Naive thymus-derived CD4-positive, alpha-beta T cell (primary cell): ENCODE measurements at regions of chr7 and their contacts with region 1.

Region 1: GRCh38 chr7:4725014-4725849 is 43.1 kb downstream of the FOXK1 start:
- DNase-seq: peak; percentile 28 to 70 (median 55)
- ATAC-seq: peak; percentile 80
- H3K4me3 ChIP-seq: peak overlapping the region; percentile 57
- H3K4me3 Mint-ChIP-seq: peak overlapping the region; percentile 85 to 95 (median 90)
- H3K27ac ChIP-seq: peak overlapping the region; percentile 86
- H3K27ac Mint-ChIP-seq: peak overlapping the region; percentile 67 to 97 (median 86)
- H3K4me1 ChIP-seq: peaks cover 4 to 15% of the 10 kb centered on the region in 2 donors
- H3K4me1 Mint-ChIP-seq: peaks cover 34 to 71% (median 62%) of the 10 kb centered on the region in 7 donors
- H3K27me3 ChIP-seq: no peaks in the 10 kb centered on the region
- H3K27me3 Mint-ChIP-seq: no peaks in the 10 kb centered on the region

Region 2: GRCh38 chr7:4352069-4352468 is 373.2 kb before region 1 on chr7:
- CTCF ChIA-PET with region 1: no interaction called
- POLR2A ChIA-PET with region 1: no interaction called
- intact Hi-C with region 1: no loop called
- DNase-seq: no peak
- ATAC-seq: no peak
- H3K4me3 ChIP-seq: no peak overlapping the region
- H3K4me3 Mint-ChIP-seq: no peak overlapping the region
- H3K27ac ChIP-seq: no peak overlapping the region
- H3K27ac Mint-ChIP-seq: no peak overlapping the region
- H3K4me1 ChIP-seq: no peaks in the 10 kb centered on the region
- H3K4me1 Mint-ChIP-seq: no peaks in the 10 kb centered on the region
- H3K27me3 ChIP-seq: no peaks in the 10 kb centered on the region
- H3K27me3 Mint-ChIP-seq: peaks cover 0 to 35% (median 27%) of the 10 kb centered on the region in 5 donors

Region 3: GRCh38 chr7:4738711-4739527 is 13.7 kb after region 1 on chr7:
- CTCF ChIA-PET with region 1: interaction called, 3 read pairs
- POLR2A ChIA-PET with region 1: interaction called, 5 read pairs
- intact Hi-C with region 1: loop called (anchors 1 kb)
- DNase-seq: peak in 3 of 9 donors; percentile 39 to 65 (median 40)
- ATAC-seq: peak; percentile 47
- H3K4me3 ChIP-seq: peak overlapping the region; percentile 22
- H3K4me3 Mint-ChIP-seq: peak overlapping the region; percentile 66 to 87 (median 82)
- H3K27ac ChIP-seq: peak overlapping the region; percentile 65
- H3K27ac Mint-ChIP-seq: peak overlapping the region; percentile 69 to 98 (median 91)
- H3K4me1 ChIP-seq: peaks cover 2 to 37% of the 10 kb centered on the region in 2 donors
- H3K4me1 Mint-ChIP-seq: peaks cover 34 to 78% (median 70%) of the 10 kb centered on the region in 7 donors
- H3K27me3 ChIP-seq: no peaks in the 10 kb centered on the region
- H3K27me3 Mint-ChIP-seq: no peaks in the 10 kb centered on the region

Region 4: DNA sequence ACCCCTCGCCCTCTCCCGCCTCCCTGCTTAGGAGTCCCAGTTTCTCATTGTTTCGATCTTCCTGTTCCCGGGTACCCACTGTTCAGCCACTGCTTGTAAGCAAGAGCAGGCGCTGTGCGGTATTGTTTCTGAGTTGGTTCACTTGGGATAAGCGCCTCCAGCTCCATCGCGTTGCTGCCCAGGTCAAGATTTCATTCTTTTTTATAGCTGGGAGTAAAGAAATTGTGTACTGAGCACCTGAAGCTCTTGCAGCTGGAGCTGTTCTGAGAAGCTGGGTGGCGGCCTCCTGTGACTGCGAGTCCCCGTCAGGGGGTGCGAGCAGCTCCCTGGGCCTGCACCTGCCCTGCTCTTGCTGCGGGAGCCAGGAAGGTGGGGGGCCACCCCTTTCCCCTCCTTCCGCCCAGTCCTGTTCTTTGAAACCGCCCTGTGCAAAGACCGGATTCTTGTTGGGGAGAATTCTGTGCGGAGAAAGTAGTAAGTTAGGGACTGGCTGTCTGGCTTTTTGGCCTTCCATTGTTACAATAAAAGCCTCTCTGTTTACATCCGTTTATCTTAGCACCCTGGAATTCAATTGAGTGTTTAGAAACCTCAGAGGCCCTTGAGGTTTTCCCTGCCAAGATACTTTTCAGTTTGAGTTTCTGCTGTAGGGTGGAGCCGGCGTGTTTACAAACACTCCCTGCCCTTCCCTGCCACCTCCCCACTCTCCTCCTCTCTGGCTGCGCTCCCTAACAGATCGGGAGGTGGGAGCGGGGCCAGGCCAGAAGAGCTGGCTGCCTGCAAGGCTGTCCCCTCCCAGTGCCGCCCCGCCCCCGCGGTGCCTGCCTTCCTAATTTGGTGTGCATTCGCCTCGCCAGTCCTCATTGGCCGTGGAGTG is 19.4 kb after region 1 on chr7:
- CTCF ChIA-PET with region 1: interaction called, 3 read pairs
- POLR2A ChIA-PET with region 1: interaction called, 4 read pairs
- intact Hi-C with region 1: loop called (anchors 1 kb)
- DNase-seq: peak; percentile 61 to 84 (median 80)
- ATAC-seq: peak; percentile 76
- H3K4me3 ChIP-seq: peak overlapping the region; percentile 65
- H3K4me3 Mint-ChIP-seq: peak overlapping the region; percentile 84 to 92 (median 88)
- H3K27ac ChIP-seq: peak overlapping the region; percentile 82
- H3K27ac Mint-ChIP-seq: peak overlapping the region; percentile 90 to 99 (median 96)
- H3K4me1 ChIP-seq: peaks cover 15 to 61% of the 10 kb centered on the region in 2 donors
- H3K4me1 Mint-ChIP-seq: peaks cover 45 to 89% (median 79%) of the 10 kb centered on the region in 7 donors
- H3K27me3 ChIP-seq: no peaks in the 10 kb centered on the region
- H3K27me3 Mint-ChIP-seq: no peaks in the 10 kb centered on the region